Activated CD8-positive, alpha-beta T cell treated with anti-CD3 and anti-CD28 coated beads for 36 hours (primary cell): ENCODE measurements at regions of chr4 and their contacts with region 1.

Region 1: GRCh38 chr4:10461091-10461849 is 4.0 kb upstream of the ZNF518B start:
- DNase-seq: peak; percentile 76
- ATAC-seq: peak; percentile 88
- H3K4me3 Mint-ChIP-seq: peak overlapping the region; percentile 73
- H3K27ac Mint-ChIP-seq: no peak overlapping the region
- H3K4me1 Mint-ChIP-seq: peaks cover 28% of the 10 kb centered on the region
- H3K27me3 Mint-ChIP-seq: peaks cover 26% of the 10 kb centered on the region
- CTCF ChIP-seq: peak; percentile 99

Region 2: GRCh38 chr4:10116580-10117358 is 344.5 kb before region 1 on chr4 and contains the start of gene WDR1:
- CTCF ChIA-PET with region 1: interaction called, 16 read pairs
- POLR2A ChIA-PET with region 1: interaction called, 6 read pairs
- intact Hi-C with region 1: no loop called
- DNase-seq: peak; percentile 90
- ATAC-seq: peak; percentile 78
- H3K4me3 Mint-ChIP-seq: peak within 1 kb of the TSS; percentile 97
- H3K27ac Mint-ChIP-seq: peak within 1 kb of the TSS; percentile 98
- H3K4me1 Mint-ChIP-seq: peaks cover 69% of the 10 kb centered on the region
- H3K27me3 Mint-ChIP-seq: no peaks in the 10 kb centered on the region
- CTCF ChIP-seq: no peak
- total RNA-seq, gene WDR1: 390 to 393 TPM

Region 3: DNA sequence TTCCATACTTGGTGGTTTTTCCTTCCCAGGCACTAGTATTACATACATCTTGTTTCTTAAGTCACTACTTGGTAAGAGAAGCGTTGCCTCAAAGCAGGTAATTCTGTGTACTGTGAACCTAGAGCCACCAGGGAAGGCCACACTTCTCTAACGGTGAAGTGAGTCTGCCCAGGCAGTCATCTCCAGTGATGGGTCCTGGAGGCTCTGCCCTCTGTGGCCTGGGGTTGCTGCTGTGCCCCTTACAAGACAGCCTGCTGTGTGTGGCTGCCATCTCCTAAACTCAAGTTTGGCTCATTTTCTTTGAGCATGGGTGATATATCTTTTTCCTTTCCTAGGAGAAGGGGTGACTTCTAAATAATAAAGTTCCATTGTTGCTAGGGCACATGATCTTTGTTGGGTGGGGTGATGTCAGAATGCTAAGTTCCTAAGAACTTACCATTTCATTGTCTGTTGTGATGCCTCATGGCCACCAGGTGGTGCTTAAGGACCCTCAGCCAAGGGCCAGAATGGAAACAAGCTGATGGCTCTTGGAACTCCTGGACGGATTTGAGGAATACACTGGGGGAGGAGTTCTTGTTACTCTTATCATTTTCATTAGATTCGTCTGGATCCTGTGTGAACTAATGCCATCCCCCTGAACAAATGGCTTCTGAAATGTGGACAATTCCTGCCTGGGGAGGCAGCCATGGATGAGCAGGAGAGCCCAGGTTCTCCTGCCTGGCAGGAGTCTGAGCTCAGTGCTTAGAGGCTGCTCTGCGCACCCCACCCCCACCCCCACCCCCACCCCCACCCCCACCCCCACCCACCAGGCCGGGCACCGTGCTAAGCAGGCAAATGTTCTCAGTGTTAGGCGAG is 303.6 kb before region 1 on chr4:
- CTCF ChIA-PET with region 1: interaction called, 10 read pairs
- POLR2A ChIA-PET with region 1: no interaction called
- intact Hi-C with region 1: no loop called
- DNase-seq: peak; percentile 60
- ATAC-seq: peak; percentile 73
- H3K4me3 Mint-ChIP-seq: no peak overlapping the region
- H3K27ac Mint-ChIP-seq: no peak overlapping the region
- H3K4me1 Mint-ChIP-seq: peaks cover 30% of the 10 kb centered on the region
- H3K27me3 Mint-ChIP-seq: no peaks in the 10 kb centered on the region
- CTCF ChIP-seq: peak; percentile 79

Region 4: DNA sequence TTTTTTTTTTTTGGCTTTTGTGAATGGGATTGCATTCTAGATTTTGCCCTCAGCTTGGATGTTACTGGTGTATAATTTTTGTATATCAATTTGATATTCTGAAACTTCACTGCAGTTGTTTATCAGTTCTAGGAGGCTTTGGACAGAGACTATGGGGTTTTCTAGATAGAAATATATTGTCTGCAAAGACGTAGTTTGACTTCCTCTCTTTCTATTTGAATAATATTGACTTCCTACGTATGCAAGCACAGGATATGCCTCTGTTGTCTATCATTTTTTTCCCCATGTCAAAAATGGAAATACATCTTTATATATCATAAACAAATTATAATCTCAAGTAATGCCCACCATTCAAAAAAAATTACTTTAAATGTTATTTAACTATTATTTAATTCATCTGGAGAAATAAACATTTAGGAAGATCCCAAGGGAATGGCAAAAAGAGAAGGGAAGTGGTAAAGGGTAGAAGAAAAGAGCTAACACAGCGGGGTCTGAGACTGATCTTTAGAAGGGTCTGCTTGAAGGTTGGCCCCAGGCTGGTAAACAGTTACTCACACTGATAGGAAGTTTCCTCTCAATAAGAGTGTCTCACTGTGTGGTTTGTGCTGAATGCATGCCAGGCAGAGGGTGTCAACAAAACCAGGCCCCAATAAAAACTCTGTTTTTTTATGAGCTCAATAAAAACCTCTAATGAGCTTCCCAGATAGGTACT is 39.8 kb before region 1 on chr4:
- CTCF ChIA-PET with region 1: interaction called, 18 read pairs
- POLR2A ChIA-PET with region 1: interaction called, 7 read pairs
- intact Hi-C with region 1: no loop called
- DNase-seq: peak; percentile 29
- ATAC-seq: peak; percentile 84
- H3K4me3 Mint-ChIP-seq: no peak overlapping the region
- H3K27ac Mint-ChIP-seq: peak overlapping the region; percentile 42
- H3K4me1 Mint-ChIP-seq: peaks cover 21% of the 10 kb centered on the region
- H3K27me3 Mint-ChIP-seq: no peaks in the 10 kb centered on the region
- CTCF ChIP-seq: no peak

Region 5: DNA sequence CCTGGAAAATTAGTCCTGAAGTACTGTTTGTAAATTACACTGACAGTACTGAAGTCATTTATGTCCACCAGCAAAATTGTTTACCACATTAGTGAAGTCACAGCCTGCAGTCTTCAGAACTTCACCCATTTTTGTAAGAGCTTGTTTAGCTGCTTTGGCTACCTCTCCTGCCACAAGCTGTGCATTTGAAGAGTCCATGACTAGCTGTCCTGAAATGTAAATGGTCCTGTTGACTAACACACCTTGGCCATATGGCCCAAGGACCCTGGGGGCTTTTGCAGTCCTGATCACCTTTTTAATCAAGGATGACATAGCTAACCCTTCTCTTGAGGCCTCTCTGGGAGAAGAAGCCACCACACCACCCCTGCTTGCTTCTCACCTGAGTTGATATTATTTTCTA is 17.4 kb after region 1 on chr4:
- CTCF ChIA-PET with region 1: interaction called, 13 read pairs
- POLR2A ChIA-PET with region 1: no interaction called
- intact Hi-C with region 1: no loop called
- DNase-seq: no peak
- ATAC-seq: no peak
- H3K4me3 Mint-ChIP-seq: no peak overlapping the region
- H3K27ac Mint-ChIP-seq: no peak overlapping the region
- H3K4me1 Mint-ChIP-seq: no peaks in the 10 kb centered on the region
- H3K27me3 Mint-ChIP-seq: peaks cover 3% of the 10 kb centered on the region
- CTCF ChIP-seq: no peak

Region 6: DNA sequence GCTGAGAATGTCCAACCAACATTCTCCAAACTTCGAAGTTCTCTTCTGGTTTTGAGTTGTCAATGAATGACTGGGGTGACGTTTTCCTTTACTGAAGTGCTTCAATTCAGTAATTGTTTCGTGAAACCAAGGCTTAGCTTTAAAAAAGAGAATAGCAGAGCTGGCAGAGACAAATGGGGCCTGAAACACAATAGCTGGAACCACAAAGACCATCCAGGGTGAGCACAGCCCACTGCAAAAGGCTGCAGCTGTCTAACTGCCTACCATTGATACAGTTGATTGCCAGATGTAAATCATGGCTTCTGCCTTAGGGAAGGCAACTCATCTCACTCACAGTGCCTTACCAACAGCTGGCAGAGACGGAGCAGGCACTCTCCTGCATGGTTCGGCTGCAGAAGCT is 74.6 kb after region 1 on chr4:
- CTCF ChIA-PET with region 1: interaction called, 22 read pairs
- POLR2A ChIA-PET with region 1: no interaction called
- intact Hi-C with region 1: loop called (anchors 5 kb)
- DNase-seq: no peak
- ATAC-seq: no peak
- H3K4me3 Mint-ChIP-seq: no peak overlapping the region
- H3K27ac Mint-ChIP-seq: no peak overlapping the region
- H3K4me1 Mint-ChIP-seq: no peaks in the 10 kb centered on the region
- H3K27me3 Mint-ChIP-seq: no peaks in the 10 kb centered on the region
- CTCF ChIP-seq: no peak

Region 7: DNA sequence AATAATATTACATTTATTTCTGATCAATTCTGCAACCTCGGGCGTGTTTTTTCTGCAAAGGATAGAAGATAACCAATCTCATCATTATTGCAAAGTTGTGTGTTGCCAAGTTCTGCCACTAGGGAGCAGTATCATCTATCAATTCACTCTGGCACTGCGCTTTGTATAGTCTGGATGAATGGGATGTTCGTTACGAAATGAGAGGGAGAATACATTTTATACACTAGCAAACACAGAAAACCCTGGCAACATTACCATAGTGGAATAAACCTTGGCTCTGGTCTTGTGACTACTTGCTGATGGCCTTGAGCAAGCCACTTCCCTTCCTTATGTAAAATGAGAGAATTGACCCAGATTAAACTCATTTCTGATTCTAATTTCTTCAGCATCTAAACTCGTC is 93.4 kb after region 1 on chr4:
- CTCF ChIA-PET with region 1: interaction called, 11 read pairs
- POLR2A ChIA-PET with region 1: no interaction called
- intact Hi-C with region 1: no loop called
- DNase-seq: peak; percentile 65
- ATAC-seq: peak; percentile 69
- H3K4me3 Mint-ChIP-seq: no peak overlapping the region
- H3K27ac Mint-ChIP-seq: no peak overlapping the region
- H3K4me1 Mint-ChIP-seq: peaks cover 6% of the 10 kb centered on the region
- H3K27me3 Mint-ChIP-seq: peaks cover 6% of the 10 kb centered on the region
- CTCF ChIP-seq: peak; percentile 78